ENCODE measurements at regions of chr4 and their contacts with region 1.

Region 1: GRCh38 chr4:38939165-38939564 is 71.6 kb downstream of the FAM114A1 start:
- DNase-seq: peak; percentile 68
- ATAC-seq: peak; percentile 95
- H3K4me3 ChIP-seq: no peak overlapping the region
- H3K27ac ChIP-seq: no peak overlapping the region; the same call in 1 of the 2 replicates
- H3K4me1 ChIP-seq: peaks cover 20% of the 10 kb centered on the region
- H3K27me3 ChIP-seq: no peaks in the 10 kb centered on the region
- CTCF ChIP-seq: no peak
- EP300 ChIP-seq: peak; percentile 58 to 89; a peak in 2 of 4 replicates
- POLR2A ChIP-seq: no peak
- RAD21 ChIP-seq: no peak

Region 2: GRCh38 chr4:38980903-38981676 is 41.9 kb after region 1 on chr4:
- CTCF ChIA-PET with region 1: no interaction called
- POLR2A ChIA-PET with region 1: no interaction called
- RAD21 ChIA-PET with region 1: interaction called, 3 read pairs
- SMC1A ChIA-PET with region 1: interaction called, 3 read pairs
- in situ Hi-C with region 1: no loop called
- intact Hi-C with region 1: loop called (anchors 5 kb)
- DNase-seq: peak; percentile 24
- ATAC-seq: peak; percentile 82
- H3K4me3 ChIP-seq: no peak overlapping the region
- H3K27ac ChIP-seq: peak overlapping the region; percentile 52
- H3K4me1 ChIP-seq: peaks cover 19% of the 10 kb centered on the region
- H3K27me3 ChIP-seq: no peaks in the 10 kb centered on the region
- CTCF ChIP-seq: no peak
- EP300 ChIP-seq: no peak
- POLR2A ChIP-seq: no peak
- RAD21 ChIP-seq: no peak

Measured in GM12878 (cell line).